ENCODE measurements at regions of chr4 and their contacts with region 1.

Region 1: GRCh38 chr4:88211473-88212252 is 53.2 kb upstream of the ABCG2 start:
- DNase-seq: peak; percentile 60
- H3K4me3 ChIP-seq: no peak overlapping the region
- H3K27ac ChIP-seq: no peak overlapping the region
- H3K4me1 ChIP-seq: no peaks in the 10 kb centered on the region
- H3K27me3 ChIP-seq: no peaks in the 10 kb centered on the region
- CTCF ChIP-seq: peak; percentile 59 to 67 (median 61)
- POLR2A ChIP-seq: no peak

Region 2: GRCh38 chr4:87853108-87853507 is 358.6 kb before region 1 on chr4:
- intact Hi-C with region 1: loop called (anchors 10 kb)
- DNase-seq: no peak
- H3K4me3 ChIP-seq: no peak overlapping the region
- H3K27ac ChIP-seq: no peak overlapping the region
- H3K4me1 ChIP-seq: no peaks in the 10 kb centered on the region
- H3K27me3 ChIP-seq: no peaks in the 10 kb centered on the region
- CTCF ChIP-seq: peak in 2 of 3 experiments; percentile 27 to 44
- POLR2A ChIP-seq: no peak

Region 3: DNA sequence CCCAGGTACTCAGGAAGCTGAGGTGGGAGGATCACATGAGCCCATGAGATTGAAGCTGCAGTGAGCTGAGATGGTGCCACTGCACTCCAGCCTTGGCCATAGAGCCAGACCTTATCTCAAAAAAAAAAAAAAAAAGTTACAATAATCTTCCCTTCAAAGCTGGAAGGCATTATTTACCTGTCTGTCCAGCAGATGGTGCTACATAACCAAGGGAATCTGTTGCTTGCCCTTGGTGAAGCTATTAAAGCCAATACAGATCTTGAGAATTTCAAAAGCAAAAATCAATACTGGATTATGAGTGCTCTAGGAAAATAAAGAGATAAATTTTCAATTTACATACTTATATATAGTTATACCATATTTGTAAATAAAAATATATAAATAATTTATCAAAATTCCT is 178.4 kb before region 1 on chr4:
- intact Hi-C with region 1: loop called (anchors 10 kb)
- DNase-seq: peak; percentile 47
- H3K4me3 ChIP-seq: no peak overlapping the region
- H3K27ac ChIP-seq: no peak overlapping the region
- H3K4me1 ChIP-seq: no peaks in the 10 kb centered on the region
- H3K27me3 ChIP-seq: no peaks in the 10 kb centered on the region
- CTCF ChIP-seq: peak; percentile 43 to 54 (median 49)
- POLR2A ChIP-seq: no peak

Region 4: DNA sequence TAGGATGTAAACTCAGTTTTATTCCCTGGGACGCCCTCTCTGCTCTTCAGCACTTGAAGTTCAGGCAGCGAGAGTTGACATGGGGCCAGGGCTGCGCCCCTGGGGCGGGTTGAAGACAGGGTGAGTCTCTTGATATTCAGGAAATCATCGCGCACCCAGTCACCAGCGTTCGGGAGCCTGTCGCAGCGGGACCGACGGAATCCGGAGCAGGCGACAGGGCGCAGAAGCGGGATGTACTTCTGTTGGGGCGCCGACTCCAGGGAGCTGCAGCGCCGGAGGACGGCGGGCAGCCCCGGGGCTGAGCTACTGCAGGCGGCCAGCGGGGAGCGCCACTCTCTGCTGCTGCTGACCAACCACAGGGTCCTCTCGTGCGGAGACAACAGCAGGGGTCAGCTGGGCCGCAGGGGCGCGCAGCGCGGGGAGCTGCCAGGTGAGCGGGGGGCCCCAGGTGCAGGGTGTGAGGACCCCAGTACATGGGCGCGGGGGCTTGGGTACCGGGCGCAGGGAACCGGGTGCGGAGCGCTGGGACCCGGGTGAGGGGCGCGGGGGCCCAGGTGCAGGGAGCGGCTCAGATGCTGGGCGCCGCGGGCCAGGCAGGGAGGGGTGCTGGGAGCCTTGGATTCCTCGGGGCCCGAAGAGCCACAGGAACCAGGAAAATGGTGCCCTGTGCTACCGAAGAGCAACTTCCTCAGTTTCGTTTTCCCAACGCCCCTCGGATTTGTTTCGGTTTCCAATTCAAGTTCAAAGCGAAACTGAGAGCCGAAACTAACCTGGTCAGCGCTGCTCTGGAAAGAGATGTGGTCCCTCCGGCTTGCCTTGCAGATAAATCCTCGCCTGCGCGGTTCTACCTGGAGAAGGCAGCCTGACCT is 167.3 kb after region 1 on chr4 and contains the start of gene HERC6:
- intact Hi-C with region 1: no loop called
- DNase-seq: peak; percentile 82
- H3K4me3 ChIP-seq: peak within 1 kb of the TSS; percentile 94 to 95
- H3K27ac ChIP-seq: peak within 1 kb of the TSS; percentile 96 to 97
- H3K4me1 ChIP-seq: no peaks in the 10 kb centered on the region
- H3K27me3 ChIP-seq: no peaks in the 10 kb centered on the region
- CTCF ChIP-seq: peak; percentile 58 to 78 (median 68)
- POLR2A ChIP-seq: no peak
- total RNA-seq, gene HERC6: 16.6 to 18.8 TPM

Region 5: GRCh38 chr4:88456757-88457306 is 245.2 kb after region 1 on chr4 and contains the start of gene HERC5:
- intact Hi-C with region 1: loop called (anchors 10 kb)
- DNase-seq: peak; percentile 95
- H3K4me3 ChIP-seq: peak within 1 kb of the TSS; percentile 80 to 97
- H3K27ac ChIP-seq: peak within 1 kb of the TSS; percentile 87 to 89
- H3K4me1 ChIP-seq: no peaks in the 10 kb centered on the region
- H3K27me3 ChIP-seq: no peaks in the 10 kb centered on the region
- CTCF ChIP-seq: peak; percentile 48 to 71 (median 69)
- POLR2A ChIP-seq: peak; percentile 22
- total RNA-seq, gene HERC5: 111 to 127 TPM